Activated CD8-positive, alpha-beta memory T cell treated with anti-CD3 and anti-CD28 coated beads, Interleukin-2, amount 10 ng/mL, durations not matched to agents 7 days and 5 days (primary cell): ENCODE measurements at regions of chr16 and their contacts with region 1.

Region 1: DNA sequence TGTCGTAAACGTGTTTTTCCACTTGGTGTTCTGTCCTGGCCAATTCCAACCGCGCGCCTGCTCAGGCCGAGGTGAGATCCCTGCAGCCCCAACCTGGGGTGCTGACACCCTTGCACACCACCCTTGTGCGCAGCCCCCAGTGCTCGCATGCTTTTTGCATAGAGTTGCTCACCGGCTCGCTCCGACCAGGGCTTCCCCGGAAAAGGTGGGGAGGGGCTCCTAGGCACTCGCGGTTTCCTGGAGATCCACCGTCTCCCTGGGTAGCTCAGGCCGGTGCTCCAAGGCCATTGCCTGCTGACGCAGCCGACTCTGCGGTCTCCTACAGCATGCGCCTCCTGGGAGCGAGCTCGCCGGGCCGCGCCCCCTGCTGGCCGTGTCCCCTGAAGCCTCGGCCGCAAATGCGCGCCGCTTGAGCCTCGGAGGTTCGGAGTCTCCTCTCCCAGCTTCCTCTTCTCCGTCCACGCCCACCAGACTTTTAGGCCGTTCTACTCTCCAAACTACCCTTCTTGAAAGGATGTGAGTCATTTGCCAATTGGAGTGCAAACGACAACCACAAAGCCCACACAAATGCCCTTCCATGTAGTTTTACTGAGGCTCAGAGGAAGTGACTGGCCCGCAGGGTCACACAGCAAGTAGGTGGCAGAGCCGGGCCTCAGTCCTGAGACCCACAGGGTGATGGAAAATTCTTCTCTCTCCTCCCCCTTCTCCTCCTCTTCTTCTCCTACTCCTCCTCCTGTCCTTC is 7.2 kb upstream of the PDP2 start:
- DNase-seq: peak; percentile 99
- ATAC-seq: peak; percentile 89
- H3K4me3 Mint-ChIP-seq: peak overlapping the region; percentile 78
- H3K27ac Mint-ChIP-seq: peak overlapping the region; percentile 92
- H3K4me1 Mint-ChIP-seq: peaks cover 54% of the 10 kb centered on the region
- H3K27me3 Mint-ChIP-seq: no peaks in the 10 kb centered on the region

Region 2: GRCh38 chr16:66608241-66609138 is 264.6 kb before region 1 on chr16:
- CTCF ChIA-PET with region 1: interaction called, 24 read pairs
- DNase-seq: peak; percentile 86
- ATAC-seq: peak; percentile 17
- H3K4me3 Mint-ChIP-seq: no peak overlapping the region
- H3K27ac Mint-ChIP-seq: peak overlapping the region; percentile 59
- H3K4me1 Mint-ChIP-seq: peaks cover 46% of the 10 kb centered on the region
- H3K27me3 Mint-ChIP-seq: no peaks in the 10 kb centered on the region

Region 3: DNA sequence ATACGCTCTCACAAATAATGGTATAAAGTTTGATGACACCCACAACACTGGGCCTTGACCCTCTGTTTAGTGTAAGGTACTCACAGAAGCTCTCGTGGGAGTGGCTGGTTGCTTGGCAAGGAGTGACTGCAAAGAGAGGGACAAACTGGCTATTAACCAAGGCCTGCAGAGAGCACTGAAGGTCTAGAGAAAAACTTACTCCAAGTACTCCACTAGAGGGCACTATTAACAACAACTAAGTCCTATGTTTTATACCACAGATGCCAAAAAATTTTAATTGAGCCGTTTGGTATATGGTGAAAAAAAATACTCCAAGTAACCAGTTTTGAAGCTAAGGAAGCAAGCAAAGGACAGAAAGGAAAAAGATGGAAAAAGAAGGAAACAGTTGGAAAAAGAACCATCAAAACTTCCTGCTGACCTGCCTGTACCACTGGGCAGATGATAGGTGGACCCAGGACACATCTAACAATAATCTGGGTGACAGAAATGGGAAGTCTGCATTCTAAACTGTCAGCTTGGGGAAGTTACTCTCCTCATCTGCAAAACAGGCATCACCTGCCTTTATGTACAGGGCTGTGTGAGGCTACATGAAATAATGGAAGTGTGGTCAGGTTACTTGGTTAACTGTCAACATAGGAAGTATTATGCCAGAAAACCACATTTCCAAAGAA is 144.9 kb before region 1 on chr16:
- CTCF ChIA-PET with region 1: interaction called, 38 read pairs
- DNase-seq: no peak
- ATAC-seq: peak; percentile 85
- H3K4me3 Mint-ChIP-seq: no peak overlapping the region
- H3K27ac Mint-ChIP-seq: peak overlapping the region; percentile 42
- H3K4me1 Mint-ChIP-seq: peaks cover 17% of the 10 kb centered on the region
- H3K27me3 Mint-ChIP-seq: no peaks in the 10 kb centered on the region

Region 4: DNA sequence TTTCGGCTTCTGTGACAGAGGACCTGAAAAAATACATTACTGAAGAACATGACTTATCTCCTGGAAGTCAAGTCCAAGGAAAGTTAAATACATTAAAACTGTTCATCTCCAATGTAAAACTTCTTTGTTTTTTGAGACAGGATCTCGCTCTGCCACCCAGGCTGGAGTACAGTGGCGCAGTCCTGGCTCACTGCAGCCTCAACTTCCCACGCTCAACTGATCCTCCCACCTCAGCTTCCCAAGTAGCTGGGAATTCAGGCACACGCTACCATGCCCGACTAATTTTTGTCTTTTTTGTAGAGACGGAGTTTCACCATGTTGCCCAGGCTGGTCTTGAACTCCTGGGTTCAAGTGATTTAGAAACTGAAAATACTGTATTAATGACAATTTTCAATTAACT is 62.1 kb before region 1 on chr16:
- CTCF ChIA-PET with region 1: interaction called, 11 read pairs
- DNase-seq: no peak
- ATAC-seq: no peak
- H3K4me3 Mint-ChIP-seq: no peak overlapping the region
- H3K27ac Mint-ChIP-seq: no peak overlapping the region
- H3K4me1 Mint-ChIP-seq: no peaks in the 10 kb centered on the region
- H3K27me3 Mint-ChIP-seq: no peaks in the 10 kb centered on the region

Region 5: DNA sequence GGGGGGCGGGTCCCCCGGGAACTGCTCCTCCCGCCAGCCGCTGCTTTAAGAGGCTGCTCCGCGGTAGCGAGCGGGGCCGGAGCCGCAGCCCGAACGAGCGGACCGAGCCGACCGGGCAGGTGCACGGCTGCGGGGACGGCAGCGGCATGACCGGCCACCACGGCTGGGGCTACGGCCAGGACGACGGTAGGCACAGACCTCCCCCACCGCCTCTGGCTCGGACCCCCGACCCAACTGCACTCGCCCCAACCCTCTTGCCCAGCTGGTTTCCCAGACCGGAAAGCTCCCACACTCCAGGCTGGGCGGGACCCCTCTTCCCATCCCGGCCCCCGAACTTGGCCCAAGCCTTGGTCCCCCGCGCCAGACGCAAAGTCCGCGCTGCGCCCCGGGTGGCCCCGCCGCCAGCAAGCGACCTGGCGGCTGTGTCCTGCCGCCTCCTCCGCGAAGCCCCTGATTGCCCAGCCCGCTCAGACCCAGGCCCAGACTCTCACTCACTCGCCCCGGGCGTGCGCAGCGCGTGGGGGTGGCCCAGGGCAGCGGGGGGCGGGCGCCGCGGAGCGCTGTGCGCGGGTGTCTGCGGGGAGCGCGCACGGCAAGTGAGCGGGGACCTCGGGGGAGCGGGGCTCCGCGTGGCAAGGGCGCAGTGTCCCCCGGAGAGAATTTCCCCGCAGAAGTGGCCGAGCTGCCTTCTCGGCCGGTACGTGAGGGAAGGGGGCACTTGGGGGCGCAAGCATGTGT is 28.6 kb before region 1 on chr16 and contains the start of gene CA7:
- CTCF ChIA-PET with region 1: interaction called, 46 read pairs
- DNase-seq: no peak
- ATAC-seq: peak; percentile 39
- H3K4me3 Mint-ChIP-seq: peak within 1 kb of the TSS; percentile 36
- H3K27ac Mint-ChIP-seq: no peak within 1 kb of the TSS
- H3K4me1 Mint-ChIP-seq: peaks cover 20% of the 10 kb centered on the region
- H3K27me3 Mint-ChIP-seq: peaks cover 50% of the 10 kb centered on the region
- total RNA-seq, gene CA7: not detected

Region 6: DNA sequence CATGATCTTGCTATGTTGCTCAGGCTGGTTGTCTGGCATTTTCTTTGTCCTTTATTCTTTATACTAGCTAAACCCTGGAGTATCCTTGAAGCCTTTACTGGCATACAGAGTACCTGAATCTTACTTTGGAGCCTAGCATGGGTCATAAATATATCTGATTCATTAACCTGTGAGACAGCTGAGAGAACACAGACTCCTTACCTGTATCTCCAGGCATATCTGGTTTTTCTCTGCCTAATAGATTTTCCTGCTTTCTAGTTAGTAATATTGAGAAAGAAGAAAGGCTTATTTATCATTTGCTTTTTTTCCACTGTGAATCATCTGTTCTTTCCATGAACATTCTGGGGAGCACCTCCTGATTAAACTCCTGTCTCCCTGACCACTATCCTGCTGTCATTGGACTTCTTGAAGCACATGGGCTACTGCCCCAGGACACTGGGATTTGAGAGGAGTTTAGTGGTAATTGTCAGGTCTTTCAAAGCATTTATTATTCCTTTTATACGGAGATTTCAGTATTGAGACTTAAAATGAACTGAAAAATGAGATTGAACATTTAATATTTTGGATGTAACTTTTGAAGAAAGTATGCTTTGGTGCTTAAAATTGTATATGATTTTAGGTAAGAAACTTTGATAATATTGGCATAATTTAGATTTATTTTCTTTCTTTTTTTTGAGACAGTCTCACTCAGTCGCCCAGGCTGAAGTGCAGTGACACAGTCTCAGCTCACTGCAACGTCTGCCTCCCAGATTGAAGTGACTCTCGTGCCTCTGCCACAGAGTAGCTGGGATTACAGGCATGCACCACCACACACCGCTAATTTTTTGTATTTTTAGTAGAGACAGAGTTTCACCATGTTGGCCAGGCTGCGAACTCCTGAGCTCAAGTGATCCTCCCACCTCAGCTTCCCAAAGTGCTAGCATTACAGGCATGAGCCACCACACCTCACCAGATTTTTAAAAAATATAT is 15.8 kb after region 1 on chr16:
- CTCF ChIA-PET with region 1: interaction called, 34 read pairs
- DNase-seq: no peak
- ATAC-seq: no peak
- H3K4me3 Mint-ChIP-seq: no peak overlapping the region
- H3K27ac Mint-ChIP-seq: no peak overlapping the region
- H3K4me1 Mint-ChIP-seq: peaks cover 45% of the 10 kb centered on the region
- H3K27me3 Mint-ChIP-seq: no peaks in the 10 kb centered on the region

Region 7: DNA sequence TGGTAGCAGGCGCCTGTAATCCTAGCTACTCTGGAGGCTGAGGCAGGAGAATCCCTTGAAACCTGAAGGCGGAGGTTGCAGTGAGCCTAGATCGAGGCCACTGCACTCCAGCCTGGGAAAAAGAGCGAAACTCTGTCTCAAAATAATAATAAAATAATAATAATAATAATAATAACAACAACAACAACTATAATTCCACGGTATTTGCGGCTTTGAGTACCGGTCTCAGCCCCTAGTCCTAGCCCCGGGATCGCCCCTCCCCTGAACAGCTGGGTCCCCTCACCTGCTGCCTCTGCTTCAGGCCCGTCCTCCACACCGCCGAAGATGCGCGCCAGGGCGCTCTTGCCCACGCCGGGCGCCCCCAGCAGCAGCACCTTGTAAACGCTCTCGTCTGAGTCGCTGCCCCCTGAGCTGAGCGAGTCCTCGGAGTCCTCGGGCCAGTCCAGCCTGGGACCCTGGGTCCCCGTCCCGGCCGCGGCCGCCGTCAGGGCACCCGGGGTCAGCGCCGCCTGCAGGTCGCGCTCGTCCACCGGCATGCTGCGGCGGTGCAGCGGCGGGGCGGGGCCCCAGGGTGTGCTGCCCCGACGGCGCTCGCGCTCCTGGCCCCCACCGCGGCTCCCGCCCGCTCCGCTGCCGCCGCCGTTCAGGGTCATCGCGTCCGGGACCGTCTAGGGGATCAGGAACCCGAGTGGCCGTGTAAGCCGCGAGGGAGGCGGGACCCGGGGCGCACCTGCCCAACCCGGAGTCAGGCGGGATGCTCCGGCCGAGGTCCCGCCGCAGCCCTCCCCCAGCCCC is 51.6 kb after region 1 on chr16:
- CTCF ChIA-PET with region 1: interaction called, 12 read pairs
- DNase-seq: peak; percentile 56
- ATAC-seq: peak; percentile 87
- H3K4me3 Mint-ChIP-seq: peak overlapping the region; percentile 60
- H3K27ac Mint-ChIP-seq: no peak overlapping the region
- H3K4me1 Mint-ChIP-seq: peaks cover 21% of the 10 kb centered on the region
- H3K27me3 Mint-ChIP-seq: peaks cover 46% of the 10 kb centered on the region

Region 8: DNA sequence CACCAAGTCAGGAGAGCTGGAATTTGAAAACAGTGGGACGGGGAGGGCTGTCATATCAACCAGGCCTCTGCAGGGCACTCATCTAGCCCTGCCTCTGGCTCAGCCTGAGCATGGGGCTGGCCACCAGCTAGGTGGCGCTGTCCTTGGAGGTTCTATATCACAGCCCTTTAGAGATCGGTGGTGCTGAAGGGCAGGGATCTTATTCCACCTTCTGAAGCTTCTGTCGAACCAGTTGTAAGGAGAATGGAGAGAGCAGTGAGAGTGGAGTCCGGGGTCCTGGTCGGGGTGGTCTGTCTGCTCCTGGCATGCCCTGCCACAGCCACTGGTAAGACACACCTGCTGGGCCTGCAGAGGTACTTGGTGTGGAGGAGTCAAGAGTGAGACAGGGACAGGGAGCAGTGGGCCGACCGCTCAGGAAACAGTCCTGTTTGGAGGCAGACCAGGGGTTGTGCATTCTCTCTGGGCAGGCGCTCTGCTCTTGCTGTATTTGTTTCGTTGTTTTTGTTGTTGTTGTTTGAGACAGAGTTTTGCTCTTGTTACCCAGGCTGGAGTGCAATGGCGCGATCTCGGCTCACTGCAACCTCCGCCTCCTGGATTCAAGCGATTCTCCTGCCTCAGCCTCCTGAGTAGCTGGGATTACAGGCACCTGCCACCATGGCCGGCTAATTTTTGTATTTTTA is 88.1 kb after region 1 on chr16 and contains the start of gene CES3:
- CTCF ChIA-PET with region 1: no interaction called
- DNase-seq: peak; percentile 84
- ATAC-seq: peak; percentile 96
- H3K4me3 Mint-ChIP-seq: peak within 1 kb of the TSS; percentile 56
- H3K27ac Mint-ChIP-seq: peak within 1 kb of the TSS; percentile 72
- H3K4me1 Mint-ChIP-seq: peaks cover 29% of the 10 kb centered on the region
- H3K27me3 Mint-ChIP-seq: no peaks in the 10 kb centered on the region
- total RNA-seq, gene CES3: 2.3 to 4.5 TPM

Region 9: DNA sequence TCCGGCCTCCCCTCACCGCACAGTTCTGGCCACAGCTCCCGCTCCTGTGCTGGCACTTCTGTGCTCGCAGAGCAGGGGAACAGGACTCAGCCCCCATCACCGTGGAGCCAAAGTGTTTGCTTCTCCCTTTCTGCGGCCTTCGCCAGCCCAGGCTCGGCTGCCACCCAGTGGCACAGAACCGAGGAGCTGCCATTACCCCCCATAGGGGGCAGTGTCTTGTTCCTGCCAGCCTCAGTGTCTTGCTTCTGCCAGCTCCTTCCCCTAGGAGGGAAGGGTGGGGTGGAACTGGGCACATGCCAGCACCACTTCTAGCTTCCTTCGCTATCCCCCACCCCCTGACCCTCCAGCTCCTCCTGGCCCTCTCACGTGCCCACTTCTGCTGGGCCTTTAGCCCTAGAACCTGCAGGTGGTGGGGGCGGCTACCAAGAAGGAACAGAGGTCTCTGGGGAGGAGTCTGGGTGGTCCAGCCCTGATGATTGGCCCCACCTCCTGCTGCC is 325.2 kb after region 1 on chr16:
- CTCF ChIA-PET with region 1: no interaction called
- DNase-seq: no peak
- ATAC-seq: peak; percentile 28
- H3K4me3 Mint-ChIP-seq: no peak overlapping the region
- H3K27ac Mint-ChIP-seq: no peak overlapping the region
- H3K4me1 Mint-ChIP-seq: peaks cover 36% of the 10 kb centered on the region
- H3K27me3 Mint-ChIP-seq: no peaks in the 10 kb centered on the region